ENCODE measurements at regions of chr19 and their contacts with region 1.

Region 1: GRCh38 chr19:8575467-8575997 is 1.7 kb downstream of the MYO1F start:
- DNase-seq: peak in 8 of 10 donors; percentile 14 to 77 (median 49)
- ATAC-seq: peak; percentile 34 to 44
- H3K4me3 Mint-ChIP-seq: peak overlapping the region; percentile 81 to 98 (median 92)
- H3K27ac Mint-ChIP-seq: peak overlapping the region; percentile 55 to 97 (median 88)
- H3K4me1 Mint-ChIP-seq: peaks cover 39 to 89% (median 87%) of the 10 kb centered on the region in 4 donors
- H3K27me3 Mint-ChIP-seq: no peaks in the 10 kb centered on the region

Region 2: DNA sequence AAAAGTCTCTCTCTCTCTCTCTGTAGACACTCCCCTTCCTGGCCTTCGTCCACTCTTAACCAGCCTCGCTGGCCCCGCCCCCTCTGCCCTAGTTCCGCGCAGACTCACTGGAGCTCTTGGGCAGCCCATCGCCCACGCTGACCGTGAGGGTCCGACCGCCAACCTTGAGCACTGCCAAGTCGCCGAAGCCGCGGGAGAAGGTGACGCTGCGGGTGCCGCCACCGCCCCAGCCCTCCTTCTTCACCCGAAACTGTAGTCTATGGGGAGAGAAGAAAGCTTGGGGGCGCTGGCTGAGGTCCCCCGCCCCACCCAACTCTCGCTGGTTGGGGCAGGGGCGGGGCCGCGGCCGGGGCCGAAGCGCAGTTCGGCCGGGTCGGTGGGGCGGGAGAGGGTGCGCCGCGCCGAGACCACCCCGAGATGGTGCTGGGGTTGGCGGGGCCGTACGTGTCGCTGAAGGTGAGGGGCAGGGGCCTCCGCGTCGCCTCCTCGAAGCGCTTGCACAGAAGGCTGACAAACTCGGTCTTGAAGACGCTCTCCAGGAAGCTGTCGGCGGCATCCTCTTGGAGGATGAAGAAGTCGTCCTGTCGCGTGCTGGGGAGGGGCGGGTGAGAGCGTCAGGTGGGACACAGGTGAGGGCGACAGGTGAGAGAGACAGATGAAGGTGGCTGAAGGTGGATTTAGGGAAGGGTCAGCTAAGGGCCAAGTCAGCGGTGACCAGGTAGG is 49.0 kb before region 1 on chr19:
- POLR2A ChIA-PET with region 1: interaction called, 802 read pairs
- DNase-seq: no peak
- ATAC-seq: peak in 1 of 2 donors; percentile 30
- H3K4me3 Mint-ChIP-seq: peak overlapping the region in 1 of 10 donors; percentile 57
- H3K27ac Mint-ChIP-seq: peak overlapping the region in 6 of 10 donors; percentile 28 to 88 (median 74)
- H3K4me1 Mint-ChIP-seq: peaks cover 5 to 24% (median 13%) of the 10 kb centered on the region in 4 donors
- H3K27me3 Mint-ChIP-seq: no peaks in the 10 kb centered on the region

Measured in naive thymus-derived CD8-positive, alpha-beta T cell (primary cell).